T-cell (primary cell): ENCODE measurements at regions of chr7 and their contacts with region 1.

Region 1: DNA sequence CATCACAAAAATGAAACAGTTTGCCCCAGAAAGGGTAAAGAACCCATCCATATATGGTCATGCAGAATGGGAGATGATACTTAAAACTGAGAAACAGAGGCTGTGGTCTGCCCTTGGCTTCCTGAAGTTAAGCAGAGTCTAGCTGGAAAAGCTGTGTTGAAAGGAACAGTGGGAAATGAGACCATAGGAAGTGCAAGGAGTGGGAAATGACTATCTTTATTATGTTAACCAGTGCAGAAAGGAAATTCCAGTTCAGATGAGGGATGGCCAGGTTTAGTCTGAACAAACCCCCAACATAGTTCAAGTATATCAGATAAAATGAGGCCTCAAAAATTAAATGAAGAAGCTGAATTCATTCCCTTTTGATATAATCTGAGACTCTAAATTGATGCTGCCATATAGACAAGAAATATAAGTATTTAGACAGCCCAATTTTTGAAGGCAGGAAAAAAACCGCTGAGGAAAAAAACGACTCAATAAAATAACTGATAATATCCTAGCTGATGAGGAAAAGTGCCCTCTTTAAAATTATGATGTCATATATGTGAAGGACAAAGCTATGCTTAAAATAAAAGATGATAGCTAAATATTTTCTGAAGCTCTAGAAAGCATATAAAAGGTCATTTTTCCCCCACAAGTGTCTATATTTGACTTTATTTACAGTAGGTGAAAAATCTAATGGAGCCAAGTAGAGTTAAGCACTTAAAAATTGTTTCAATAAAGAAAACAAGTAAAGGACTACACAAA is 112.4 kb upstream of the TARP start:
- DNase-seq: no peak
- ATAC-seq: no peak
- H3K4me3 ChIP-seq: no peak overlapping the region
- H3K4me3 Mint-ChIP-seq: no peak overlapping the region
- H3K27ac ChIP-seq: no peak overlapping the region
- H3K27ac Mint-ChIP-seq: no peak overlapping the region
- H3K4me1 ChIP-seq: no peaks in the 10 kb centered on the region
- H3K4me1 Mint-ChIP-seq: peaks cover 0 to 5% (median 0%) of the 10 kb centered on the region in 3 donors
- H3K27me3 ChIP-seq: no peaks in the 10 kb centered on the region
- H3K27me3 Mint-ChIP-seq: no peaks in the 10 kb centered on the region

Region 2: GRCh38 chr7:38232502-38233366 is 153.1 kb before region 1 on chr7:
- CTCF ChIA-PET with region 1: no interaction called
- POLR2A ChIA-PET with region 1: no interaction called
- DNase-seq: peak; percentile 30 to 87 (median 71)
- ATAC-seq: peak; percentile 80 to 87 (median 85)
- H3K4me3 ChIP-seq: peak overlapping the region; percentile 17 to 57
- H3K4me3 Mint-ChIP-seq: peak overlapping the region; percentile 62 to 63 (median 63)
- H3K27ac ChIP-seq: peak overlapping the region; percentile 84
- H3K27ac Mint-ChIP-seq: peak overlapping the region; percentile 94 to 95
- H3K4me1 ChIP-seq: peaks cover 9 to 67% of the 10 kb centered on the region in 2 experiments
- H3K4me1 Mint-ChIP-seq: peaks cover 35 to 87% (median 80%) of the 10 kb centered on the region in 3 donors
- H3K27me3 ChIP-seq: no peaks in the 10 kb centered on the region
- H3K27me3 Mint-ChIP-seq: no peaks in the 10 kb centered on the region

Region 3: DNA sequence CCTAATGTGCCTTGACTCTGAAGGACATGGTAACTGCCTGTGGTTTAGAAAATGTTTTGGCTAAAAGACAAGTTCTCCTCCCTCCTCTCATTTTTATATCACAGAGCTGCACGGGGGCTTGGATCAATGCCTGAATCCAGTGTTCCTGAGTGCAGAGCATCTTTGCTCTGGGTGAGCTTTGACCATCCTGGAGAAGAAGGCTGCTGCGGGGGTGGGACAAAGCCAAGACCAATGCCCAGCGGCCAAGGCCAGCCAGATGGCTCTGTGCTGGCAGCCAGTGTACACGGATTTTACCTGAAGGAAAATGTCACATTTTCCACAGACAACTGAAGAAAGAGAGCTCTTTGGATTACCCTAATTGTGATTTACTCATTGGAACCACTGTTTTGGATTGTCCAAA is 10.4 kb before region 1 on chr7:
- CTCF ChIA-PET with region 1: interaction called, 6 to 12 read pairs
- POLR2A ChIA-PET with region 1: no interaction called
- DNase-seq: no peak
- ATAC-seq: no peak
- H3K4me3 ChIP-seq: no peak overlapping the region
- H3K4me3 Mint-ChIP-seq: no peak overlapping the region
- H3K27ac ChIP-seq: no peak overlapping the region
- H3K27ac Mint-ChIP-seq: no peak overlapping the region
- H3K4me1 ChIP-seq: peaks cover 0 to 17% of the 10 kb centered on the region in 2 experiments
- H3K4me1 Mint-ChIP-seq: peaks cover 27 to 32% (median 28%) of the 10 kb centered on the region in 3 donors
- H3K27me3 ChIP-seq: no peaks in the 10 kb centered on the region
- H3K27me3 Mint-ChIP-seq: no peaks in the 10 kb centered on the region

Region 4: GRCh38 chr7:38858259-38859165 is 472.7 kb after region 1 on chr7:
- CTCF ChIA-PET with region 1: no interaction called
- POLR2A ChIA-PET with region 1: no interaction called
- DNase-seq: no peak
- ATAC-seq: no peak
- H3K4me3 ChIP-seq: no peak overlapping the region
- H3K4me3 Mint-ChIP-seq: no peak overlapping the region
- H3K27ac ChIP-seq: no peak overlapping the region
- H3K27ac Mint-ChIP-seq: no peak overlapping the region
- H3K4me1 ChIP-seq: no peaks in the 10 kb centered on the region
- H3K4me1 Mint-ChIP-seq: peaks cover 19 to 23% (median 23%) of the 10 kb centered on the region in 3 donors
- H3K27me3 ChIP-seq: no peaks in the 10 kb centered on the region
- H3K27me3 Mint-ChIP-seq: no peaks in the 10 kb centered on the region